Left lung (tissue), 14 donors: ENCODE measurements at regions of chr10 and their contacts with region 1.

Region 1: GRCh38 chr10:102583435-102584417 is 60.6 kb upstream of the TRIM8 start:
- DNase-seq: peak; percentile 83 to 92 (median 86)
- ATAC-seq: peak; percentile 98
- H3K4me3 ChIP-seq: no peak overlapping the region
- H3K27ac ChIP-seq: peak overlapping the region in 1 of 2 donors; percentile 33
- H3K4me1 ChIP-seq: peaks cover 5 to 24% of the 10 kb centered on the region in 2 donors
- H3K27me3 ChIP-seq: no peaks in the 10 kb centered on the region
- CTCF ChIP-seq: peak; percentile 75 to 92

Region 2: GRCh38 chr10:102503281-102504220 is 80.2 kb before region 1 on chr10 and contains the start of gene SUFU:
- intact Hi-C with region 1: loop called in 1 of 2 experiments (anchors 10 kb)
- DNase-seq: peak; percentile 97 to 98 (median 98)
- ATAC-seq: peak; percentile 80
- H3K4me3 ChIP-seq: peak within 1 kb of the TSS; percentile 67 to 92
- H3K27ac ChIP-seq: peak within 1 kb of the TSS; percentile 85 to 91
- H3K4me1 ChIP-seq: peaks cover 41 to 78% of the 10 kb centered on the region in 2 donors
- H3K27me3 ChIP-seq: no peaks in the 10 kb centered on the region
- CTCF ChIP-seq: peak; percentile 83 to 92
- polyA plus RNA-seq, gene SUFU: 26.9 to 30.7 (median 28.3) TPM